Head of caudate nucleus (tissue), 42 donors: ENCODE measurements at regions of chr17 and their contacts with region 1.

Region 1: GRCh38 chr17:4498461-4499397 is at the start of gene SPNS2:
- DNase-seq: peak; percentile 60 to 93 (median 86)

Region 2: GRCh38 chr17:4118015-4118743 is 380.6 kb before region 1 on chr17:
- intact Hi-C with region 1: no loop called
- DNase-seq: no peak

Region 3: DNA sequence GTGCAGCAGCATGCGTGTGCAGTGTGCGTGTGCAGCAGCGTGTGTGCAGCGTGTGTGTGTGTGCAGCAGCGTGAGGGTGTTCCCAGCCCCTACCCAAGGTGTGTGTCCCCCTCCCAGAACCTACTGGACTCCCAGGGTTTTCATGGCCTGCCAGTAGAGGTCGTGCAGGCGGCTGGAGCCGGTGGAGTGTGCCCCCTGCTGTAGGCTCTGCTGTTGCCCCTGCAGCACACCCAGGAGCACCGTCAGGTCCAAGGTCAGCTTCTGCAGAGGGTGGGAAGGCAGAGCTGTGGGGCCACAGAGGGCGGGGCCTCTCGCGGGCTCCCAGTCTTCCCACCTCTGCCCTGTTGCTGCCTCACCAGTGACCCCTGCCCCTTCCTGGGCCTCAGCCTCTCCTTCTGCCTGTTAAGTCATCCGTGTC is 41.5 kb after region 1 on chr17:
- intact Hi-C with region 1: loop called (anchors 5 kb)
- DNase-seq: peak in 1 of 42 donors; percentile 61

Region 4: GRCh38 chr17:4648741-4649140 is 150.0 kb after region 1 on chr17:
- intact Hi-C with region 1: no loop called
- DNase-seq: no peak

Region 5: DNA sequence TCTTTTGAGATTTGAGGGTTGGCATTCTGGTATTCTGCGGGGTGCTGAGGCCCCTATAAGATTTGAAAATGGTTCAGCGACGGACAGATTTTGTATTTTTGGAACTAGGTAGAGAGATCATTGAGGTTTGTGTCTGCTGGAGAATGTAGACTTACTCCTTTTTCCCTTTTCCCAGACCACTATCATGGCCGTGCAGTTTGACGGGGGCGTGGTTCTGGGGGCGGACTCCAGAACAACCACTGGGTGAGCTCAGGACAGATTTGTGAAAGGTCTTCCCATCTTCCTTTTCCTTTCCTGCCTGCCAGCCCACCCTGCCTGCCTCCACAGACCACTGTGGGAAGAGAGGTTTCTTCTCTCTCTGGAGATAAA is 297.8 kb after region 1 on chr17:
- intact Hi-C with region 1: no loop called
- DNase-seq: peak in 10 of 42 donors; percentile 10 to 45 (median 26)